ENCODE measurements at regions of chr3 and their contacts with region 1.

Region 1: GRCh38 chr3:39406368-39407258 is at the start of gene RPSA:
- DNase-seq: peak; percentile 90
- H3K4me3 ChIP-seq: peak within 1 kb of the TSS; percentile 85
- H3K27ac ChIP-seq: peak within 1 kb of the TSS; percentile 80
- H3K27me3 ChIP-seq: no peaks in the 10 kb centered on the region
- CTCF ChIP-seq: peak; percentile 36
- polyA plus RNA-seq, gene RPSA: 3,266 and 3,502 TPM in 2 replicates

Region 2: GRCh38 chr3:39383045-39383880 is 23.4 kb before region 1 on chr3 and contains the start of gene SLC25A38:
- CTCF ChIA-PET with region 1: interaction called, 3 read pairs
- POLR2A ChIA-PET with region 1: interaction called, 12 read pairs
- DNase-seq: peak; percentile 50
- H3K4me3 ChIP-seq: peak within 1 kb of the TSS; percentile 91
- H3K27ac ChIP-seq: peak within 1 kb of the TSS; percentile 93
- H3K27me3 ChIP-seq: no peaks in the 10 kb centered on the region
- CTCF ChIP-seq: peak; percentile 38
- polyA plus RNA-seq, gene SLC25A38: 33.1 and 34.7 TPM in 2 replicates